Heart left ventricle (tissue), 16 donors: ENCODE measurements at regions of chr7 and their contacts with region 1.

Region 1: GRCh38 chr7:107180378-107180777 is 11.6 kb downstream of the HBP1 start:
- DNase-seq: peak in 1 of 5 donors; percentile 46
- ATAC-seq: peak in 3 of 4 donors; percentile 49 to 53 (median 50)
- H3K4me3 ChIP-seq: no peak overlapping the region
- H3K27ac ChIP-seq: peak overlapping the region in 2 of 12 donors; percentile 22 to 23
- H3K4me1 ChIP-seq: peaks cover 0 to 63% (median 33%) of the 10 kb centered on the region in 12 donors
- H3K27me3 ChIP-seq: no peaks in the 10 kb centered on the region
- CTCF ChIP-seq: no peak
- POLR2A ChIP-seq: no peak

Region 2: DNA sequence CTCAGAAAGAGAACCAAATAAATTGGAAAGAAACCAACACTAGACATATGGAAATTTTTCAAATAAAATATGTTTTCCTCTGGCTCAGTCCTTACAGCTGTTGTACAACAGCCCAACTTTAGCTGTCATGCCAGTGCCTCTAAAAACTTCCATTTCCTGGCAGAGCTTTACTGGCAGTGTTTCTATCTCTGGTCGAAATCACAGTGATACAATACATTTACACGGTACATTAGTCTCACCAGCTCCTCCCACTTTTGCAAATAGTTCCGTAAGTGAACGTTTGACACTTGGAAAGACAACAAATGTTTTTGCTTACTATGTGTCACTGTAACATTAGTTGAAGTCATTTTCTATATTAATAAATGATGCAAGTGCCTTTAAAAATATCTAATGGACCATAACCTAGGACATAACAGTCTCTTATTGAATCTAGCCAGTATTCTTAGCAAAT is 429.5 kb after region 1 on chr7:
- intact Hi-C with region 1: loop called in 1 of 10 experiments (anchors 10 kb)
- DNase-seq: no peak
- ATAC-seq: peak; percentile 55 to 86 (median 79)
- H3K4me3 ChIP-seq: no peak overlapping the region
- H3K27ac ChIP-seq: peak overlapping the region; percentile 33 to 74 (median 58)
- H3K4me1 ChIP-seq: peaks cover 0 to 34% (median 19%) of the 10 kb centered on the region in 12 donors
- H3K27me3 ChIP-seq: no peaks in the 10 kb centered on the region
- CTCF ChIP-seq: no peak
- POLR2A ChIP-seq: no peak